Mammary epithelial cell (primary cell): ENCODE measurements at regions of chr15 and their contacts with region 1.

Region 1: DNA sequence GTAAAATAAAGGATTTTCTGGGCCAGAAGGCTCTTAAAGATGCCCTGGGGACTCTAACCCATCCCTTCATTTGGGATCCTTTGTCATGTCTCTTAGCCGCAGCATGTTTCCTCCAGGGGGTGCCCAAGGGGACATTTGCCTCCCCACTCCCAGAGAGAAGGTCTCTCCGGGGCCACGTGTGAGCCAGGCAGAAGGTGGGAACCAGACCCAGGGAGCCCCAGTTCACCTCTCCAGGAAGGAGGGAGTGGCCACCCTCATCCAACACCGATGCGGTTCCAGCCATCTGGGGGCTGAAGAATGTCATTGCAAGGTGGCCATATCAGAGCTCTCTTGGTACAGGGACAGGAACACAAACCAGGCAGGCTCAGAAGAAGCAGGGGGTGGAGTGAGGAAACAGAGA is 25.2 kb downstream of the ST8SIA2 start:
- DNase-seq: no peak
- H3K4me3 ChIP-seq: no peak overlapping the region
- H3K27ac ChIP-seq: no peak overlapping the region
- H3K4me1 ChIP-seq: no peaks in the 10 kb centered on the region
- H3K27me3 ChIP-seq: no peaks in the 10 kb centered on the region
- CTCF ChIP-seq: no peak

Region 2: DNA sequence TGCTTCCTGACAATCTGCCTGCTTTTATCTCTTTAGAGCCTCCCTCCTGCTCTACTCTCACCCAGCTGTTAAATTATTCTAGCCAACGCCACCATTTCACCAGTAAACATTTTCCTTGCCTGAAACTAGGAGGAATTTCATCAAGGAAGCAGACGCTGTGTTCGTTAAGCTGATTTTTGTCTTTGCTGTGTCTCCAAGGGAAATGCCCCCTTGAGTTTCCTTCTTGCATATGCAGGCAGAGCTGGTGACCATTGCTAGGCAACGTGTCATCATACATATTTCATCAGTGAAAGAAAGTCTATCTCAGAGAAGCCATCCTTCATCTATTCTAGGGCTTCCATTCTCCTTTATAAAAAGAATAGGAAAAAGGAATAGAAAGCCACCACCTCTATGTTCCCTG is 112.2 kb before region 1 on chr15:
- CTCF ChIA-PET with region 1: no interaction called
- dilution Hi-C with region 1: no loop called
- in situ Hi-C with region 1: no loop called
- intact Hi-C with region 1: no loop called
- DNase-seq: peak; percentile 1
- H3K4me3 ChIP-seq: no peak overlapping the region
- H3K27ac ChIP-seq: no peak overlapping the region
- H3K4me1 ChIP-seq: no peaks in the 10 kb centered on the region
- H3K27me3 ChIP-seq: no peaks in the 10 kb centered on the region
- CTCF ChIP-seq: peak in 1 of 2 donors; percentile 13

Region 3: DNA sequence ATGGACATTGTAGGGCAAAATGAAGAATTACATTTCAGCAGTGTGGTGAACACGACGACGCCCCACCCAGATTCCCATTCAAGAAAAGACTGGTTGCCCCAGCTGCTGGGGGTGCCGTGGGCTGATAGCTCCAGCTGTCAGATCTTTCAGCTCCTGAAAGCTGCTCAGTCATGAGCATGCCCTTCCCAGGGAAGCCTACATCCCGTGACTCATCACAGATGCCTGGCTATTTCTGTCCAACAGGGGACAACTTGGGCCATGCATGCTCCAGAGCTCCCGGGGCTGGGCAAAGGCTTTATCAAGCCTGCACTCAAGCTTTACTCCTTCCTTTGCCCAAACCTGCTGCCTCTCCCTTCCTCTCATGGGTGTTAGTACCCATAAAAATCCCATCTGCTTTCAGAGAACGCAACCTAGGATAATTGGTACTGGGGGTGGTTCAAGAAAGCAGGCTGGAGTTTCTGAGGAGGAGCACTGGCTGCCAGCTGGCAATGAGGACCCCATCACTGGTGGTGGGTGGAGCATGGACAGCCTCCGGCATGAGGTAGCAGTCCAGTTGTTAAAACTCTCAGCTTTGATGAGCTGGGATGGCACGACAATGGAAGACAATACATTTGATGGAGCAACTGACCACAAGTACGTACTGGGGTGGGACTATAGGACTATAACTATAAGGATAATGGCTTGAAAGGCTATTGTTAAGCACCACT is 41.7 kb before region 1 on chr15:
- CTCF ChIA-PET with region 1: no interaction called
- dilution Hi-C with region 1: no loop called
- in situ Hi-C with region 1: no loop called
- intact Hi-C with region 1: no loop called
- DNase-seq: peak; percentile 60
- H3K4me3 ChIP-seq: no peak overlapping the region
- H3K27ac ChIP-seq: no peak overlapping the region
- H3K4me1 ChIP-seq: peaks cover 32% of the 10 kb centered on the region
- H3K27me3 ChIP-seq: no peaks in the 10 kb centered on the region
- CTCF ChIP-seq: peak in 1 of 2 donors; percentile 16

Region 4: GRCh38 chr15:92473756-92474155 is 54.9 kb after region 1 on chr15:
- CTCF ChIA-PET with region 1: no interaction called
- dilution Hi-C with region 1: loop called (anchors 5 kb)
- in situ Hi-C with region 1: no loop called
- intact Hi-C with region 1: no loop called
- DNase-seq: no peak
- H3K4me3 ChIP-seq: no peak overlapping the region
- H3K27ac ChIP-seq: no peak overlapping the region
- H3K4me1 ChIP-seq: no peaks in the 10 kb centered on the region
- H3K27me3 ChIP-seq: no peaks in the 10 kb centered on the region
- CTCF ChIP-seq: no peak